ENCODE measurements at regions of chr19 and their contacts with region 1.

Region 1: DNA sequence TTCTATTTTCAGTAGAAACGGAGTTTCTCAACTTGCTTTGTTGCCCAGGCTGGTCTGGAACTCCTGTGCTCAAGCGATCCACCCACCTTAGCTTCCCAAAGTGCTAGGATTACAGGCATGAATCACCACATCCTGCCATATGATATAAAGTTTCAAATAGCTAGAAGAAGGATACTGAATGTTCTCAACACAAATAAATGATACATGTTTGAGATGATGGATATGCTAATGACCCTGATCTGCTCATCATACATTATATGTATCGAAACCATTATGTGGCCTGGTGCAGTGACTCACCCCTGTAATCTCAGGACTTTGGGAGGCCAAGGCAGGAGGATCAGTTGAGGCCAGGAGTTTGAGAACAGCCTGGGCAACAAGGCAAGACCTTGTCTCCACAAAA is 11.5 kb downstream of the CIB3 start:
- DNase-seq: peak; percentile 27
- H3K27ac ChIP-seq: peak overlapping the region; percentile 88
- CTCF ChIP-seq: no peak

Region 2: DNA sequence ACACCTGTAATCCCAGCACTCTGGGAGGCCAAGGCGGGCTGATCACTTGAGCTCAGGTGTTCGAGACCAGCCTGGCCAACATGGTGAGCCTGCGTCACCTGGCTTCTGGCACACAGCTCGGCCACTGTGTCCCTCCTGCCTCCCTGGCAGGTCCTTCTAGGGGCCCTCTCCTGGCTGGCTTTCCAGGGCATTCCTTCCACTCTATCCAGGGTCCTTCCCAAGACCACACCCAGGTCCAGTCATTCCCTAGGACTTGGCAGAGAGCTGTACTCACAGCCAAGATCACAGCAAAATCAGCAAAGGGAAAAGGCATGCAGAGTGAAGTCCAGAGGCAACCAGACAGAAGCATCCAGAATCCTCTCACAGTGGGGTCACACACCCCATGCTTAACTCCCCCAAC is 28.0 kb before region 1 on chr19:
- CTCF ChIA-PET with region 1: no interaction called
- POLR2A ChIA-PET with region 1: interaction called, 11 read pairs
- DNase-seq: no peak
- H3K27ac ChIP-seq: peak overlapping the region; percentile 42
- CTCF ChIP-seq: no peak